ENCODE measurements at regions of chrX and their contacts with region 1.

Region 1: DNA sequence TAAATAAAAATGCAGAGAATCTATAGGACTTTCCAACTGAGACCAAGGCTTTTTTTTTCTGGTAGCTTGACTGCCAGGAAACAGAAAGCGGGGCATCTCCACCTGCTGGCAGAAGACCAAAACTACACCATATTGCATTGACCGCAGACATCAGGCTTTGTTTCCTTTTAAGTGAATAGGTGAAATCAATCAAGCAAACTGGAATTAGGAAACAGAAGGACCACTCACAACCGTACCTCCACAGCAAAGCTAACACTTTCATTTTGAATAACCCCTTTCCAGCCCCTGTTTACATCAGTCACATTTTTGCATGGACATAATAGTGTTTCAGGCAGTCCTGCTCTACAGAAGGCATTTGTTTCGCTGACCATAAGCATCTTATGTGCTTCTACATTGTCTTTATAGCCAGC is 218.2 kb downstream of the IDS start:
- DNase-seq: peak; percentile 11
- ATAC-seq: peak; percentile 41; the same call in 1 of the 3 replicates
- H3K4me3 ChIP-seq: no peak overlapping the region
- H3K27ac ChIP-seq: no peak overlapping the region
- H3K4me1 ChIP-seq: no peaks in the 10 kb centered on the region
- H3K27me3 ChIP-seq: no peaks in the 10 kb centered on the region
- CTCF ChIP-seq: peak; percentile 61
- EP300 ChIP-seq: no peak
- POLR2A ChIP-seq: no peak
- RAD21 ChIP-seq: no peak

Region 2: DNA sequence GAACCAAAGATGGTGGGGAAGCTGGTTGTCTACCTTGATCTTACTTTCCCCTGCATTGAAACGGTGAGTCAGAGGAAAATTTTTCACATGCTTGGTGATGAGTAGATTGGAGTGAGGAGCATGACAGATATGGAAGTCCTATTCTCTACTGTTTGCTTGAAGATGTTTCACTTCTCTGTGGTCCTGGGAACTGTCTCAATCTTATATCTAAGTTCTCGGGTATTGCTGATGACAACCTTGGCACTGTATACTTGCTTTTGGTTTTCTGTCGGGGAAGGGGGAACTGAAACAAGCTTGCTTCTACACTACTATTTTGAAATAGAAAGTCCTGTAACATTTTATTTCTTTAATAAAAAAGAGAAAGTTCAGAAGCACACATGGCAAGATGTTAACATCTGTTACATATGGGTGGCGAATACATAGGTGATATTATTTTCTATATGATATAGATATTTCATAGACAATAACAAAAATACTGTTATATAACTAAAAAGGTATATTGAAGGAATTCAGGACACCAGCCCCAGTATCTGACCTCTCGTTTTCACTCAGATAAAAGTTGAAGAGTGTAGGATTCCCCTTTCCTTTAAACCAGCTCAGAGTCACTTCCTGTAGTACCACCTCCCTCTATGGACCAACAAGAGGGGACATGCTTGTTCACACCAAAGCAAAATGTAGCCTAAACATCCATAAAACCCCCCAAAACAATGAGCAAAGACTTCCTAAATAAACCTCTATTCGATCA is 1217.0 kb before region 1 on chrX:
- CTCF ChIA-PET with region 1: no interaction called
- POLR2A ChIA-PET with region 1: no interaction called
- in situ Hi-C with region 1: loop called (anchors 25 kb)
- intact Hi-C with region 1: no loop called
- DNase-seq: no peak
- ATAC-seq: no peak
- H3K4me3 ChIP-seq: no peak overlapping the region
- H3K27ac ChIP-seq: no peak overlapping the region
- H3K4me1 ChIP-seq: no peaks in the 10 kb centered on the region
- H3K27me3 ChIP-seq: no peaks in the 10 kb centered on the region
- CTCF ChIP-seq: no peak
- EP300 ChIP-seq: no peak
- POLR2A ChIP-seq: no peak
- RAD21 ChIP-seq: no peak

Region 3: GRCh38 chrX:149198980-149199732 is 87.8 kb before region 1 on chrX:
- CTCF ChIA-PET with region 1: no interaction called
- POLR2A ChIA-PET with region 1: no interaction called
- in situ Hi-C with region 1: no loop called
- intact Hi-C with region 1: no loop called
- DNase-seq: no peak
- ATAC-seq: no peak
- H3K4me3 ChIP-seq: no peak overlapping the region
- H3K27ac ChIP-seq: no peak overlapping the region
- H3K4me1 ChIP-seq: no peaks in the 10 kb centered on the region
- H3K27me3 ChIP-seq: no peaks in the 10 kb centered on the region
- CTCF ChIP-seq: no peak
- EP300 ChIP-seq: no peak
- POLR2A ChIP-seq: no peak
- RAD21 ChIP-seq: no peak